Activated CD4-positive, alpha-beta T cell treated with anti-CD3 and anti-CD28 coated beads for 36 hours (primary cell): ENCODE measurements at regions of chr21 and their contacts with region 1.

Region 1: DNA sequence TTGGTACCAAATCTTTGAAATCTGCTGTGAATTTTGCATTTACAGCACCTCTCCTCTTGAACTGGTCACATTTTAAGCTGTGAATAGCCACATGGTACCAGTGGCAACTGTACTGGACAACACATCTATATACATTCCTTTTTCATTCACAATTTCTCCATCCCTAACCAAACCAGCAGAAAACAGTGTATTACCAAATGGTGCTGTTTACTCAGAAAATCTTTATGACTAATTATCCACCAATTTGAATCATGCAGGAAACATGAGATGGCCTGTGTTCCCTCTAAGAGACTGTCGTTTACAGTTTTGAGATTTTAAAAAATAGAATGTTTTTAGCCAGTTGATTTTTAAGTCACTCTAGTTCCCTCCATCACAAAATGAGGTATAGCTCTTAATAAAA is 17.6 kb upstream of the CCT8 start:
- DNase-seq: no peak
- ATAC-seq: peak; percentile 71
- H3K4me3 Mint-ChIP-seq: no peak overlapping the region
- H3K27ac Mint-ChIP-seq: no peak overlapping the region
- H3K4me1 Mint-ChIP-seq: peaks cover 17% of the 10 kb centered on the region
- H3K27me3 Mint-ChIP-seq: no peaks in the 10 kb centered on the region

Region 2: DNA sequence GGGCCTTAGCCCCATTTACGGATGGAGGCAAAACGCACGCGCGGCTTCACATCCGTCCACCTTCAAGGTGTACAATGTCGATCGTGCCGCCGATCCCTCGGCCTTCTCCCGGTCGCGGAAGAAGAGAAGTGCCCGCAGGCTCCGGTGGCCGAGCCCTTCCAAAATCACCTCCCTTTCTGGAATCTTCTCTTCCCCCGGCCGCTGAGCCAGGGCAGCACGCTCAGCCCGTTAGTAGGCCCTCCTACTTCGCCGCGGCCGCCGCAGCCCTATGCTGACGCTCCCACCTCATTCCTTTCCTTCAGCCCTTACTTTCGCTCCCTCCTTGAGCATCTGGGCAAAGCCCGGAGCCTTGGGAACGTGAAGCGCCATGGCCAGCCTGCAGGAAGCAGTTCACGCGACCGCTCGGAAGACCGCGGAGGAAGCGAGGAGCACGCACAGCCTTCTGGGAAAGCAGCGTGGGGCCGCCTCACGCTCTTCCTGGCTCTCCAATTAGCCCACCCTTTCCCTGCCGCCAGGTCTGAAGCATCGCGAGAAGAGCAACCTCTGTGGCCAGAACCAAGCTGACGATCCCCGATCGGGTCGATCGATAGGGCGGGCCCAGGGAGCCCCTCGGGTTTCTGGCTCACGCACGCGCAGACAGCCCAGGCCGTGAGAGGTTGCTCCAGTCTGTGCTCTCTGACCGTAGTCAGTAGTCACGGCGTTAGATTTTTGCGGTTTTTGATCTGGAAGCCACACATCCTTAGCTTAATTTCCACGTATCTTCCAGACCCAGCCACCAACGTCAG is 17.6 kb before region 1 on chr21 and contains the start of gene CCT8:
- CTCF ChIA-PET with region 1: interaction called, 10 read pairs
- POLR2A ChIA-PET with region 1: no interaction called
- intact Hi-C with region 1: no loop called
- DNase-seq: peak; percentile 99
- ATAC-seq: peak; percentile 91
- H3K4me3 Mint-ChIP-seq: peak within 1 kb of the TSS; percentile 100
- H3K27ac Mint-ChIP-seq: peak within 1 kb of the TSS; percentile 100
- H3K4me1 Mint-ChIP-seq: peaks cover 47% of the 10 kb centered on the region
- H3K27me3 Mint-ChIP-seq: no peaks in the 10 kb centered on the region
- total RNA-seq, gene CCT8: 465 to 572 TPM

Region 3: DNA sequence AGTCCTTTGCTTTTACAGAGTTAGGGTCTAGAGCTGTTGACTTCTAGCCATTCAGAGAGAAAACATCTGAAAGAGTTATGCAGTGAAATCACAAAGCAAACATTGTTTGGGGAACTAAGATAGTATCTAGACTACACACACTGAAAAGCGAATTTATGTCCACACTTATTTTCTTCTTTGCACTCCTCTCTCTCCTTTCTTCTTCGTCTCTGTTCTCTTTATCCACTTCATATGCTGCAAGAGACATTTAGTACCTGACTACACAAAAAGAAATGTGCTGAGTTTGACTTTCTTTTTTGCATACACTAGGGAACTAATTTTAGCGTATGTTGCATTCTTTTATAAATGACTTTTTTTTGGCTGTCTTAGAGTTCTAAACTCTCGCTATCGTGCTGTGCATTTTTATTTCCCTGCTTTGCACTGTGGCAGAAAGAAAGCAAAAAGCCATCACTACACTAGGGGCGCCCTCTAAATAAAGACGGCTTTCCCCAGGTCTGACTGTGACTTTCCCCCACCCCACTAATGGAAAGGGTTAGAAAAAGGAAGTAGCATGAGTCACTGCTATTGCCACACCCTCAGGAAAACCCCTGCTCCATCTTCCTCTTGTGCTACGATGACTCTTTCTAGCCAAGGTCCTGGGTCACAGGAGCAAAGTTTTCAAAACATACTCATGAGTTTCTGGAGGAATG is 105.1 kb after region 1 on chr21:
- CTCF ChIA-PET with region 1: no interaction called
- POLR2A ChIA-PET with region 1: no interaction called
- intact Hi-C with region 1: loop called in 1 of 2 experiments (anchors 10 kb)
- DNase-seq: peak; percentile 85
- ATAC-seq: peak; percentile 97
- H3K4me3 Mint-ChIP-seq: peak overlapping the region; percentile 64
- H3K27ac Mint-ChIP-seq: peak overlapping the region; percentile 93
- H3K4me1 Mint-ChIP-seq: peaks cover 34% of the 10 kb centered on the region
- H3K27me3 Mint-ChIP-seq: peaks cover 2% of the 10 kb centered on the region

Region 4: DNA sequence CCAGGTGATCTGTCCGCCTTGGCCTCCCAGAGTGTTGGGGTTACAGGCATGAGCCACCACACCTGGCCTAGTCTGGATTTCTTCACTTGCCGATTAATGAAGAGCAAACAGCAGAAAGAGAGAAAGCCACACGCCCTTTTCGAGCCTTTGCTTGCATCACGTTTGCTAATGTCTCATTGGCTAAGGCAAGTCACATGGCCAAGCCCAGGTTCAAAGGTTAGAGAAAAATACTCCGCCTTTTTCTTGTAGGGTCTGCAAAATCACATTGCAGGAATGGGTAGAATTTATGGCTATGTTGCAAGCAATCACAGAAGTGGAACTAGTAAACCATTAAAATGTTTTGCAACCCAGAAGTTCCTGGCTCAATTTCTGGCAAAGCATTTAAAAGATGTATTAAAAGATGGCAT is 180.9 kb after region 1 on chr21:
- CTCF ChIA-PET with region 1: no interaction called
- POLR2A ChIA-PET with region 1: no interaction called
- intact Hi-C with region 1: no loop called
- DNase-seq: no peak
- ATAC-seq: no peak
- H3K4me3 Mint-ChIP-seq: no peak overlapping the region
- H3K27ac Mint-ChIP-seq: no peak overlapping the region
- H3K4me1 Mint-ChIP-seq: no peaks in the 10 kb centered on the region
- H3K27me3 Mint-ChIP-seq: peaks cover 4% of the 10 kb centered on the region

Region 5: GRCh38 chr21:29349702-29350101 is 258.7 kb after region 1 on chr21:
- CTCF ChIA-PET with region 1: interaction called, 5 read pairs
- POLR2A ChIA-PET with region 1: no interaction called
- intact Hi-C with region 1: loop called (anchors 1 to 2 kb)
- DNase-seq: no peak
- ATAC-seq: no peak
- H3K4me3 Mint-ChIP-seq: no peak overlapping the region
- H3K27ac Mint-ChIP-seq: no peak overlapping the region
- H3K4me1 Mint-ChIP-seq: peaks cover 22% of the 10 kb centered on the region
- H3K27me3 Mint-ChIP-seq: no peaks in the 10 kb centered on the region

Region 6: DNA sequence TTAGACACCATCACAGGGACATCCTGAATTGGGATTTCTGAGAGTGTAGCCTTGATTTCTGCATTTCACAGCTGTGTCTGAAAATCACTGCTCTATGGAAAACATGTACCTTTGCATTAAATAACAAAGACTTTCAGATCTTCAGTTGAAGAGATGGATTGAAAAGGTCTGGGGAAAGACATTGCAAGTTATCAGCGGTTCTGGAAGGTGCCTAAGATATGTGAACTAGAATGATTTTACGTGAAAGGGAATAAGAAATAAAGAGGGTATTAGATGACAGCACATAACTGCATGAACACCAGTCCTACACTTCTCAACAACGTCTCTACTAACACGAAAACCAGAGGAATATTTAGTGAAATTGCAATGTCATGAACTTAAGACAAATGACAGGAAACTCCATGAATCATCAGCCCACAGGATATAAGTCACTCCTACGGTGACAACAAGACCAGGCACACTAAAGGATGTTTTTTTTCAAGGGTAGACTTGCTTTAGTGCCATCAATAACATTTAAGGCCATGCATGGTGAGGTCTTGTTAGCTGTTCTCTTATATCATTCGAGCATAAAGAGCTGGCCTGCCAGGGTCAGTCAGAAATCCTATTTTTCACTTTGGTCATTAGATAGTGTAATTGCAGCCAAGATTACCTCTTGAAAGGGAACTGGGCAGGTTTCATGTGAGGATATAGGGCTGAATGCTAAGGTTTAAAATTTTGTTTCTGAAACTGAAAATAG is 565.6 kb after region 1 on chr21:
- CTCF ChIA-PET with region 1: no interaction called
- POLR2A ChIA-PET with region 1: no interaction called
- intact Hi-C with region 1: loop called in 1 of 2 experiments (anchors 5 kb)
- DNase-seq: peak; percentile 7
- ATAC-seq: peak; percentile 98
- H3K4me3 Mint-ChIP-seq: peak overlapping the region; percentile 48
- H3K27ac Mint-ChIP-seq: peak overlapping the region; percentile 82
- H3K4me1 Mint-ChIP-seq: peaks cover 34% of the 10 kb centered on the region
- H3K27me3 Mint-ChIP-seq: peaks cover 2% of the 10 kb centered on the region